ENCODE measurements at regions of chr1 and their contacts with region 1.

Region 1: GRCh38 chr1:92424381-92424780 is 62.3 kb downstream of the GFI1 start:
- DNase-seq: no peak
- H3K4me3 ChIP-seq: no peak overlapping the region
- H3K27ac ChIP-seq: no peak overlapping the region
- H3K4me1 ChIP-seq: no peaks in the 10 kb centered on the region
- H3K27me3 ChIP-seq: peaks cover 0 to 2% of the 10 kb centered on the region in 2 experiments
- CTCF ChIP-seq: no peak
- POLR2A ChIP-seq: no peak

Region 2: DNA sequence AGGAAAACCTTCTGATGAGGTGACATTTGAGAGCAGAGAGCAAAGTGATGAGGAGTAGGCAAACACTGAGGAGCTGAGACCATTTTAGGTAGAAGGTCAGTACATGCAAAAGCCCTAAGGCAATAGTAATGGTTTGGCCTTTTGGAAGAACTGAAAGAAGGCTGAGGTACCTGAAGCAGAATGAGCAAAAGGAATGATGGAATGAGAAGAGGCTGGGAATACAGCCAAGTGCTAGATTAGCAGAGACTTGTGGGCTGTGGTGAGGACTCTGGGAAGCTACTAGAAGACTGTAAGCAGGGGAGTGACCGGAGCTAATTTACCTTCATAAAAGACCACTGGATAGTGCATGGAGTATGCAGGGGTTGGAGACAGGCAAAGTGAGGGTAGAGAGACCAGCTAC is 15.6 kb before region 1 on chr1:
- CTCF ChIA-PET with region 1: interaction called, 3 read pairs
- POLR2A ChIA-PET with region 1: no interaction called
- dilution Hi-C with region 1: no loop called
- intact Hi-C with region 1: loop called (anchors 2 kb)
- DNase-seq: no peak
- H3K4me3 ChIP-seq: no peak overlapping the region
- H3K27ac ChIP-seq: no peak overlapping the region
- H3K4me1 ChIP-seq: no peaks in the 10 kb centered on the region
- H3K27me3 ChIP-seq: peaks cover 0 to 6% of the 10 kb centered on the region in 2 experiments
- CTCF ChIP-seq: no peak
- POLR2A ChIP-seq: no peak